Aorta (tissue), 5 donors: ENCODE measurements at regions of chr6 and their contacts with region 1.

Region 1: GRCh38 chr6:6547110-6547879 is 41.2 kb upstream of the LY86 start:
- DNase-seq: peak; percentile 92 to 94
- ATAC-seq: peak; percentile 96
- H3K4me3 ChIP-seq: peak overlapping the region in 1 of 2 donors; percentile 1
- H3K27ac ChIP-seq: no peak overlapping the region
- H3K4me1 ChIP-seq: no peaks in the 10 kb centered on the region
- H3K27me3 ChIP-seq: no peaks in the 10 kb centered on the region

Region 2: DNA sequence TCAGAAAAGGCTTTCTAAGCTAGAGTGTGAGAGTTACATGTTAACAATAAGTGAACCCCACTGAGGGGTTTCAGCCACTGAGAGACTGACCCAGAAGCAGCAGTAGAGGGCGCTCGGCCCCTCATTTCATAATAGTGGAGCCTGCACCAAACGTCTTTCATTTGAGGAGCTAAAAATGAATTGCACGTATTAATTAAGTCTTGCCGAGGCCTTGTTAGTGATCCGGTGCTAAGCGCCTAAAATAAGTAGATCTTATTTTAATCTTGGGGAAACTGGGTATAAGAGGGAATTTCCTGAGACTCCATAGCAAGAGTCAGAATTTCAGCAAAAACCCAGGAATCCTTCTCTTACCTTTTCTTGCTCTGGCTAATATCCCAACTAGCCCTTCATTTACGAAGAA is 1076.3 kb before region 1 on chr6:
- intact Hi-C with region 1: loop called (anchors 10 kb)
- DNase-seq: peak in 1 of 2 donors; percentile 79
- ATAC-seq: peak; percentile 55
- H3K4me3 ChIP-seq: no peak overlapping the region
- H3K27ac ChIP-seq: no peak overlapping the region
- H3K4me1 ChIP-seq: no peaks in the 10 kb centered on the region
- H3K27me3 ChIP-seq: no peaks in the 10 kb centered on the region

Region 3: GRCh38 chr6:6057424-6058053 is 489.8 kb before region 1 on chr6:
- intact Hi-C with region 1: loop called (anchors 2 to 5 kb)
- DNase-seq: no peak
- ATAC-seq: no peak
- H3K4me3 ChIP-seq: no peak overlapping the region
- H3K27ac ChIP-seq: no peak overlapping the region
- H3K4me1 ChIP-seq: no peaks in the 10 kb centered on the region
- H3K27me3 ChIP-seq: peaks cover 0 to 1% of the 10 kb centered on the region in 2 donors

Region 4: GRCh38 chr6:6366803-6367202 is 180.5 kb before region 1 on chr6:
- intact Hi-C with region 1: no loop called
- DNase-seq: no peak
- ATAC-seq: no peak
- H3K4me3 ChIP-seq: no peak overlapping the region
- H3K27ac ChIP-seq: no peak overlapping the region
- H3K4me1 ChIP-seq: no peaks in the 10 kb centered on the region
- H3K27me3 ChIP-seq: peaks cover 0 to 2% of the 10 kb centered on the region in 2 donors